ENCODE measurements at regions of chr16 and their contacts with region 1.

Region 1: DNA sequence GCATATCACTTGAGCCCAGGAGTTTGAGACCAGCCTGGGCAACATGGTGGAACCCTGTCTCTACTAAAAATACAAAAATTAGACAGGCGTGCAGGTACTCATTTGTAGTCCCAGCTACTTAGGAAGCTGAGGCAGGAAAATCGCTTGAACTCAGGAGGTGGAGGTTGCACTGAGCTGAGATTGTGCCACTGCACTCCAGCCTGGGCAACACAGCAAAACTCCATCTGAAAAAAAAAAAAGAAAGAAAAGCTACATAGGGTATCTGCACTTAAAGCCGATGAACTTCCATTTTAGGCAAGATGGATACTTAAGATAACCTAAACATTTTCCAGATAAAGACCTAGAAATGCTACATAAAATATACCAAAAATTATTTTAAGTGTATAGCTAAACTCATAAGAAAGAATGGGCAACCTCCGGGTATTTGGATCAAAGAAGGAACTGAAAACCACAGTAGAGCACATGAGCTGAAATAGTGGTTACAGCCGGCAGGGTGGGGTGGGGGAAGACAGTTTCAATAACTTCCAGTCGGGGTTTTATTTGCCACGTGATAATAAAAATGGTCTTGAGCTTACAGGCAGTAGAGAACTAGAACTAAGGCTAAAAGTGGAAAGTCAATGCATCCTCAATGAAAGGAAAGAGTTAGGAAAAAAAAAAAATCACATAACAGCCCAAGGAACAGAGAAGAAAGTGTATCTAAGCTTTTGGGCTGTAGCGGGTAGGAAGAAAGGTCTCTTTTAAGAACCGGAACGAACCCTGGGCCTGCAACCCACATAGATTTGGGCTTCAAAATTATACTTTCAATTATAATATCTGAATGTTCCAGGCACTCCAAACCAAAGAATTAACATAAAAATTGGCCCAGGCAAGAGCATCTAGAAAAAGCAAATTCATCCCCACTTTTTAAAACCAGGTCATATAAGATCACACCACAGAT is 53.1 kb downstream of the CFDP1 start:
- DNase-seq: no peak
- H3K4me3 Mint-ChIP-seq: no peak overlapping the region
- H3K27ac Mint-ChIP-seq: peak overlapping the region; percentile 19
- H3K4me1 Mint-ChIP-seq: peaks cover 38% of the 10 kb centered on the region
- H3K27me3 Mint-ChIP-seq: no peaks in the 10 kb centered on the region
- CTCF ChIP-seq: no peak

Region 2: GRCh38 chr16:75342308-75342829 is 37.8 kb before region 1 on chr16:
- CTCF ChIA-PET with region 1: interaction called, 4 read pairs
- POLR2A ChIA-PET with region 1: interaction called, 25 read pairs
- intact Hi-C with region 1: loop called (anchors 2 kb)
- DNase-seq: peak; percentile 87
- H3K4me3 Mint-ChIP-seq: no peak overlapping the region
- H3K27ac Mint-ChIP-seq: peak overlapping the region; percentile 85
- H3K4me1 Mint-ChIP-seq: peaks cover 30% of the 10 kb centered on the region
- H3K27me3 Mint-ChIP-seq: no peaks in the 10 kb centered on the region
- CTCF ChIP-seq: no peak

Region 3: GRCh38 chr16:75491876-75492275 is 111.7 kb after region 1 on chr16:
- CTCF ChIA-PET with region 1: no interaction called
- POLR2A ChIA-PET with region 1: no interaction called
- intact Hi-C with region 1: no loop called
- DNase-seq: no peak
- H3K4me3 Mint-ChIP-seq: no peak overlapping the region
- H3K27ac Mint-ChIP-seq: no peak overlapping the region
- H3K4me1 Mint-ChIP-seq: peaks cover 5% of the 10 kb centered on the region
- H3K27me3 Mint-ChIP-seq: no peaks in the 10 kb centered on the region
- CTCF ChIP-seq: peak; percentile 17

Region 4: GRCh38 chr16:75761108-75761507 is 380.9 kb after region 1 on chr16:
- CTCF ChIA-PET with region 1: no interaction called
- POLR2A ChIA-PET with region 1: no interaction called
- intact Hi-C with region 1: no loop called
- DNase-seq: peak; percentile 11
- H3K4me3 Mint-ChIP-seq: no peak overlapping the region
- H3K27ac Mint-ChIP-seq: no peak overlapping the region
- H3K4me1 Mint-ChIP-seq: peaks cover 10% of the 10 kb centered on the region
- H3K27me3 Mint-ChIP-seq: peaks cover 3% of the 10 kb centered on the region
- CTCF ChIP-seq: no peak

Measured in MCF 10A (cell line).